ENCODE measurements at regions of chr11 and their contacts with region 1.

Region 1: GRCh38 chr11:113305440-113306336 is 8.7 kb upstream of the TTC12 start:
- DNase-seq: peak in 1 of 2 donors; percentile 81
- H3K4me3 ChIP-seq: no peak overlapping the region
- H3K27ac ChIP-seq: no peak overlapping the region
- H3K4me1 ChIP-seq: peaks cover 0 to 2% of the 10 kb centered on the region in 2 donors
- H3K27me3 ChIP-seq: no peaks in the 10 kb centered on the region
- CTCF ChIP-seq: peak; percentile 89 to 93 (median 90)

Region 2: GRCh38 chr11:113796663-113797259 is 491.1 kb after region 1 on chr11:
- intact Hi-C with region 1: loop called (anchors 2 kb)
- DNase-seq: no peak
- H3K4me3 ChIP-seq: no peak overlapping the region
- H3K27ac ChIP-seq: no peak overlapping the region
- H3K4me1 ChIP-seq: no peaks in the 10 kb centered on the region
- H3K27me3 ChIP-seq: no peaks in the 10 kb centered on the region
- CTCF ChIP-seq: peak; percentile 23 to 69 (median 54)